ENCODE measurements at regions of chrX and their contacts with region 1.

Region 1: DNA sequence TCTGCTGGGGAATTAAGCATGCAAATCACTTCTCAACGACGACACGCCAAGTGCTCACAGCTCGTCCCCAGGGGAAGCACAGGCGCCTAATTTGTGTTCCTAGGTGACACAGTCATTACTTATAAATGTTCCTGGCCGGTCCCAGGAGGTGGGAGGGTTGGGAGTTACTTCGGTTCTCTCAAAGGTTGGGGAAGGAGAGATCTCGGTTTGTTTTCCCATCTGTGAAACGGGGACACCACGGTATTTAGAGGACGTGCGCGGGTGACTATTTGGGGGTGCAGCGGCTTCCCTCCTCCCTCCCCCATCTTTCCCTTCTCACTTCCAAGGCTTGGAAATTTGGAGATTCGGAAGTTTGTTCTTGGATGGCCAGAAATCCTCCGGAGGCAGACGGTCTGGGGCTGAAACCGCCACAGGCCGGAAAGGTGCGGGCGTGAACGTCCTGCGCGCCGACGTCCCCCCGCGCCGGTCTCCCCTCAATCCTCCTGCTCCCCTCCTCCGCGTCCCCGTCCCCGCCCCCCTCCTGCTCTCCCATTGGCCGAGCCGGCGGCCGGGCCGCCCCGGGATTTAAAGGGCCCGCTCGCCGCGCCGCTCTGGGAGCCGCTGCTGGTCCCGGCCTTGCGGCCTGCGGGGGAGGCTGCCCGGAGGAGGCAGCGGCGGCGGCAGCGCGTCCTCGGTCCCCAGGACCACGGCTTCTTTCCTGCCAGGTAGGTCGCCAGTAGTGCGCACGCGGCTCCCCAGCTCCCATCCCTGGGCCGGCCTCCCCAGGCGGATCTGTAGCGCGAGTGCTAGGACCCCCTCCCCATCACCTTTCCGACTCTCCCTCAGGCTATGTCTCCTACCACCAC is at the start of gene PORCN:
- DNase-seq: peak; percentile 50 to 81 (median 66)
- ATAC-seq: peak; percentile 96
- H3K4me3 ChIP-seq: peak within 1 kb of the TSS; percentile 71
- H3K4me3 Mint-ChIP-seq: peak within 1 kb of the TSS; percentile 82 to 95 (median 91)
- H3K27ac ChIP-seq: peak within 1 kb of the TSS; percentile 85
- H3K27ac Mint-ChIP-seq: peak within 1 kb of the TSS; percentile 78 to 93 (median 88)
- H3K4me1 ChIP-seq: peaks cover 4 to 8% of the 10 kb centered on the region in 2 donors
- H3K4me1 Mint-ChIP-seq: peaks cover 10 to 28% (median 16%) of the 10 kb centered on the region in 7 donors
- H3K27me3 ChIP-seq: no peaks in the 10 kb centered on the region
- H3K27me3 Mint-ChIP-seq: no peaks in the 10 kb centered on the region
- total RNA-seq, gene PORCN: 13.1 to 19.0 (median 16.8) TPM

Region 2: DNA sequence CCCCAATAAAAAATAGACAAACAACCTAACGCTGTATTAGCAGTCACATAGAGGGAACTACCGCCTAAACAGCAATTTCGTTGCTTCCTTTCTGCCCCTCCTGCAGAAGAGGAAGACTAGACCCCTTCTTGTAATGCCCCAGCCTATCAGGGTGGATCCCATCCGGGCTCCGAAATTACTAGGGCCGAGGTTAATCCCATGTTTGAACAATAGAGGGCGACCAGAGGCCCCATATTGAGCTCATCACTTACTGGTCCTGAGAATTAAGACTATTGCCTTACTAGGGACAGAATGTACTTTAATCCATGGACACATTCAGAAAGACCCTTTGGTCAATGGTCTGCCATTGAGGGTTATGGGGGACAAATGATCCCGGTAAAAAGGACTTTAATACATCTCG is 425.4 kb before region 1 on chrX:
- CTCF ChIA-PET with region 1: no interaction called
- POLR2A ChIA-PET with region 1: no interaction called
- intact Hi-C with region 1: loop called in 1 of 2 experiments (anchors 1 kb)
- DNase-seq: peak in 8 of 9 donors; percentile 21 to 59 (median 44)
- ATAC-seq: peak; percentile 78
- H3K4me3 ChIP-seq: no peak overlapping the region
- H3K4me3 Mint-ChIP-seq: no peak overlapping the region
- H3K27ac ChIP-seq: no peak overlapping the region
- H3K27ac Mint-ChIP-seq: no peak overlapping the region
- H3K4me1 ChIP-seq: no peaks in the 10 kb centered on the region
- H3K4me1 Mint-ChIP-seq: peaks cover 0 to 3% (median 0%) of the 10 kb centered on the region in 7 donors
- H3K27me3 ChIP-seq: no peaks in the 10 kb centered on the region
- H3K27me3 Mint-ChIP-seq: no peaks in the 10 kb centered on the region

Region 3: DNA sequence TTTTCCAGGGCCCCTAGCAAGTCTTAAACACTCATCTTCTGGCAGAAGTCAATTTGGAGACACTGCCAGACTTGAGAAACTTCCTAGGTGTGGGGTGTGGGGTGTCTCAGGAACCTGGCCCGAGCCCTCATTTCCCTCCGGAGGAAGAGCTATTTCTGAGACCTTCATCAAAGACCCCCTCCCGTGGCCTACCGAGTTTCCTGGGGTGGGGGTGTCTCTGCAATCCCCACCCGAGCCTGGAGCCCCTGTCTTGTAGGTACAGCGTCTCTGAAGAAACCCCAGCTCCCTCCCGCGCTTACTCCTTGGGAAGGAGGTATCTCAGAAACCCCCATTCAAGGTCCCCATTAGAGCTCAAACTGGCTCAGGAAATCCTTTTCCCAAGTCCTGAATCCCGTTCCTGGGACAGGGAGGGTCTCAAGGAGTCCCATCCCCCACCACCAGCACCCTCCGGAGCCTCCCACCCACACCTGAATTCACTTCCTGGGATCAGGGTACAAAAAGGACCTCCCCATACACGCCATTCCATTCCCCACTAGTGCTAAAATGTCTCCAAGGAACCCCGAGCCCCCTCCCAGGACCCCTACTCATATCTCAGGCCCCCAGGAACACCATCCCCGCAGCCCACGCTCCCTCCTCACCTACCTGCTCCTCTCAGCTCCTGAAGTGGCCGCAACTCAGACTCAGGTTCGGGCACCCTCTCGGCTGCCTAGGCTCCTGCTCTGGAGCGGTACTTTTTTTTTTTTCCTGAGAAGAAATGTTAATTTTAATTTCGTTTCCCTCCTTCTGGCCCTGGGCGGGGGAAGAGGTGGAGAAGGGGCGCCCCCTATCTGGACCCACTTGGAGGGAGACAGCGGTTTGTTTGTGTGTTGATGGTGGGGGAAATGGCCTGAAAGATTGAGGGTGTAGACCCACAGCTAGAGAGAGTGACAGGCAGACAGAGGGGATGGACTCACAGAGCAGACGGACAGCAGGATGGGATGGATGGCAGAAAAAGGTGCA is 39.6 kb before region 1 on chrX:
- CTCF ChIA-PET with region 1: no interaction called
- POLR2A ChIA-PET with region 1: interaction called, 3 read pairs
- intact Hi-C with region 1: loop called in 1 of 2 experiments (anchors 5 kb)
- DNase-seq: peak in 7 of 9 donors; percentile 16 to 38 (median 24)
- ATAC-seq: peak; percentile 64
- H3K4me3 ChIP-seq: peak overlapping the region; percentile 64
- H3K4me3 Mint-ChIP-seq: peak overlapping the region; percentile 89 to 97 (median 92)
- H3K27ac ChIP-seq: peak overlapping the region; percentile 73
- H3K27ac Mint-ChIP-seq: peak overlapping the region; percentile 73 to 96 (median 82)
- H3K4me1 ChIP-seq: peaks cover 0 to 5% of the 10 kb centered on the region in 2 donors
- H3K4me1 Mint-ChIP-seq: peaks cover 12 to 39% (median 23%) of the 10 kb centered on the region in 7 donors
- H3K27me3 ChIP-seq: no peaks in the 10 kb centered on the region
- H3K27me3 Mint-ChIP-seq: no peaks in the 10 kb centered on the region

Region 4: GRCh38 chrX:48521353-48522243 is 13.0 kb after region 1 on chrX and contains the start of gene EBP:
- CTCF ChIA-PET with region 1: no interaction called
- POLR2A ChIA-PET with region 1: interaction called, 3 read pairs
- intact Hi-C with region 1: loop called (anchors 1 kb)
- DNase-seq: peak; percentile 82 to 96 (median 94)
- ATAC-seq: peak; percentile 98
- H3K4me3 ChIP-seq: peak within 1 kb of the TSS; percentile 78
- H3K4me3 Mint-ChIP-seq: peak within 1 kb of the TSS; percentile 73 to 93 (median 89)
- H3K27ac ChIP-seq: peak within 1 kb of the TSS; percentile 82
- H3K27ac Mint-ChIP-seq: peak within 1 kb of the TSS; percentile 90 to 99 (median 94)
- H3K4me1 ChIP-seq: peaks cover 12 to 19% of the 10 kb centered on the region in 2 donors
- H3K4me1 Mint-ChIP-seq: peaks cover 14 to 39% (median 34%) of the 10 kb centered on the region in 7 donors
- H3K27me3 ChIP-seq: no peaks in the 10 kb centered on the region
- H3K27me3 Mint-ChIP-seq: no peaks in the 10 kb centered on the region
- total RNA-seq, gene EBP: 33.3 to 188 (median 35.3) TPM

Region 5: GRCh38 chrX:48574270-48575266 is 65.9 kb after region 1 on chrX and contains the start of gene RBM3:
- CTCF ChIA-PET with region 1: no interaction called
- POLR2A ChIA-PET with region 1: no interaction called
- intact Hi-C with region 1: loop called in 1 of 2 experiments (anchors 1 kb)
- DNase-seq: peak; percentile 64 to 96 (median 92)
- ATAC-seq: peak; percentile 94
- H3K4me3 ChIP-seq: peak within 1 kb of the TSS; percentile 68
- H3K4me3 Mint-ChIP-seq: peak within 1 kb of the TSS; percentile 88 to 100 (median 97)
- H3K27ac ChIP-seq: peak within 1 kb of the TSS; percentile 99
- H3K27ac Mint-ChIP-seq: peak within 1 kb of the TSS; percentile 95 to 100 (median 99)
- H3K4me1 ChIP-seq: peaks cover 16 to 20% of the 10 kb centered on the region in 2 donors
- H3K4me1 Mint-ChIP-seq: peaks cover 6 to 32% (median 25%) of the 10 kb centered on the region in 7 donors
- H3K27me3 ChIP-seq: no peaks in the 10 kb centered on the region
- H3K27me3 Mint-ChIP-seq: no peaks in the 10 kb centered on the region
- total RNA-seq, gene RBM3: 176 to 374 (median 329) TPM

Region 6: DNA sequence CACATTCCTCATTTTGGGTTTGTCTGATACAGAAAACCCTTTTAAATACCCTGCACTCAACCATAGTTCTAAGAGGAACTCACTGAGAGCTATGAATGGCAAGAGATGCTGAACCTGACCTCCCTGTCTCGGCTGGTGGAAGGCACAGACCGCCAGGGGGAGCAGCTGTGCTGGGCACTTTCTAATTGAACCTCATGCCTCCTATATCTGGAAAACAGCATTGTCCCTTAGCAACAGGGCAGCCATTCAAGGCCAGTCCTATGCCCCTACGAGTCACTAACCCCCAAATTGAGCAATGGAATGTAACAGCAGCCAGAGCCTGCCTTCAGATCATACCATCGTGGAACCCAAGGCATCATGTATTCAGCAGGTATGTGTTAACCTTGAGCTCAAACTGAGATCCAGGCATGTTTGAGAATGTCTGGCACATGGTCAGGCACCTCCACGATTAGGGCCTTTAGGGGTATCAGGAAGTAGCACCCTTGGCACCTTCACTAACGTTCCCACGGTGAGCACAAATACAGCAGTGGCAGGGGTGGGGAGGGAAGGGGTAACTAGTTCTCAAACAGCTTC is 1375.8 kb after region 1 on chrX:
- CTCF ChIA-PET with region 1: no interaction called
- POLR2A ChIA-PET with region 1: no interaction called
- intact Hi-C with region 1: no loop called
- DNase-seq: peak; percentile 11 to 53 (median 38)
- ATAC-seq: peak; percentile 51
- H3K4me3 ChIP-seq: no peak overlapping the region
- H3K4me3 Mint-ChIP-seq: peak overlapping the region in 2 of 10 donors; percentile 26 to 37
- H3K27ac ChIP-seq: no peak overlapping the region
- H3K27ac Mint-ChIP-seq: peak overlapping the region in 1 of 9 donors; percentile 72
- H3K4me1 ChIP-seq: peaks cover 10 to 15% of the 10 kb centered on the region in 2 donors
- H3K4me1 Mint-ChIP-seq: peaks cover 7 to 38% (median 30%) of the 10 kb centered on the region in 7 donors
- H3K27me3 ChIP-seq: no peaks in the 10 kb centered on the region
- H3K27me3 Mint-ChIP-seq: no peaks in the 10 kb centered on the region

Measured in naive thymus-derived CD4-positive, alpha-beta T cell (primary cell).